Common myeloid progenitor, CD34-positive (primary cell): ENCODE measurements at regions of chr11 and their contacts with region 1.

Region 1: GRCh38 chr11:119168471-119169281 is at the start of gene NLRX1:
- DNase-seq: peak; percentile 82 to 93 (median 92)
- H3K4me3 ChIP-seq: peak within 1 kb of the TSS; percentile 68 to 87 (median 79)
- H3K27ac ChIP-seq: peak within 1 kb of the TSS; percentile 40 to 66
- H3K4me1 ChIP-seq: peaks cover 0 to 23% (median 10%) of the 10 kb centered on the region in 4 experiments
- H3K27me3 ChIP-seq: no peaks in the 10 kb centered on the region

Region 2: GRCh38 chr11:119144825-119145486 is 23.7 kb before region 1 on chr11:
- CTCF ChIA-PET with region 1: interaction called, 15 read pairs
- POLR2A ChIA-PET with region 1: interaction called, 3 read pairs
- DNase-seq: peak; percentile 71 to 86 (median 84)
- H3K4me3 ChIP-seq: no peak overlapping the region
- H3K27ac ChIP-seq: no peak overlapping the region
- H3K4me1 ChIP-seq: peaks cover 0 to 18% (median 16%) of the 10 kb centered on the region in 4 experiments
- H3K27me3 ChIP-seq: peaks cover 0 to 38% (median 19%) of the 10 kb centered on the region in 5 experiments

Region 3: GRCh38 chr11:119155733-119156492 is 12.8 kb before region 1 on chr11:
- CTCF ChIA-PET with region 1: interaction called, 42 read pairs
- POLR2A ChIA-PET with region 1: no interaction called
- DNase-seq: peak in 2 of 3 donors; percentile 26 to 36
- H3K4me3 ChIP-seq: no peak overlapping the region
- H3K27ac ChIP-seq: no peak overlapping the region
- H3K4me1 ChIP-seq: no peaks in the 10 kb centered on the region
- H3K27me3 ChIP-seq: peaks cover 0 to 13% (median 5%) of the 10 kb centered on the region in 5 experiments